ENCODE measurements at regions of chr12 and their contacts with region 1.

Region 1: GRCh38 chr12:57309420-57309819 is 58.4 kb upstream of the STAC3 start:
- DNase-seq: no peak
- ATAC-seq: no peak
- H3K4me3 ChIP-seq: no peak overlapping the region
- H3K27ac ChIP-seq: no peak overlapping the region
- H3K4me1 ChIP-seq: no peaks in the 10 kb centered on the region
- H3K27me3 ChIP-seq: no peaks in the 10 kb centered on the region
- CTCF ChIP-seq: no peak

Region 2: GRCh38 chr12:56839915-56840325 is 469.5 kb before region 1 on chr12:
- intact Hi-C with region 1: no loop called
- DNase-seq: peak; percentile 67
- ATAC-seq: peak; percentile 70
- H3K4me3 ChIP-seq: no peak overlapping the region
- H3K27ac ChIP-seq: peak overlapping the region; percentile 75
- H3K4me1 ChIP-seq: peaks cover 46% of the 10 kb centered on the region
- H3K27me3 ChIP-seq: no peaks in the 10 kb centered on the region
- CTCF ChIP-seq: peak; percentile 56

Region 3: DNA sequence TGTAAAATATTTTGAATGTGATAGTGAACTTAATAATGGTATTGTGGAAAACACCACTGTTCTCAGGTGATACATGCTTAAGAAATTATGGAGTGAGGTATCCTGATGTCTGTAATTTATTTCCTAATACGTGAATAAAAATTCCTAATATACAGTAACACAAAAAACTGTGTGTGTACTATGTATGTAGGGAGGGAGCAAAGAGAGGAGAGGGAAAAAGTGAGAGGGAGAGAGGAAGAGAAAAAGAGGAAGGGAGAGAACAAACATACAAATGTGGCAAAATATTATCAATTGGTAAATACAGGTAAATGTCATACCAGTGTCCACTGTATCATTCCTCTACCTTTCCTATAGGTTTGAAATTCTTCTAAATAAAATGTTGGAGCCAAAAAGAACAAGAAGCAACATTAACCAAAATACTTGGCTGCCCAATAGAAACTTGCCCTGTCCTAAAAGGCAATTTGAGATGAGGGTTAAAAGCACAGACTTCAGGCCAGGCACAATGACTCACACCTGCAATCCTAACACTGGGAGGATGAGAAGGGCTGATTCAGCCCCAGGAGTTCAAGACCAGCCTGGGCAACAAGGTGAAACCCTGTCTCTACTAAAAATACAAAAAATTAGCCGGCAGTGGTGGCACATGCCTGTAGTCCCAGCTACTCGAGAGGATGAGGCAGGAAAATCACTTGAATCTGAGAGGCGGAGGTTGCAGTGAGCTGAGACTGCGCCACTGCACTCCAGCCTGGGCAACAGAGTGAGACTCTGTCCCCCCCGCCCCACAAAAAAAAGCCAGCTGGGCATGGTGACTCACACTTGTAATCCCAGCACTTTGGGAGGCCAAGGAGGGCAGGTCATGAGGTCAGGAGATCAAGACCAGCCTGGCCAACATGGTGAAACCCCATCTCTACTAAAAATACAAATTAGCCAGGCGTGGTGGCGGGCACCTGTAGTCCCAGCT is 106.9 kb after region 1 on chr12:
- intact Hi-C with region 1: no loop called
- DNase-seq: no peak
- ATAC-seq: no peak
- H3K4me3 ChIP-seq: no peak overlapping the region
- H3K27ac ChIP-seq: no peak overlapping the region
- H3K4me1 ChIP-seq: no peaks in the 10 kb centered on the region
- H3K27me3 ChIP-seq: no peaks in the 10 kb centered on the region
- CTCF ChIP-seq: no peak

Region 4: DNA sequence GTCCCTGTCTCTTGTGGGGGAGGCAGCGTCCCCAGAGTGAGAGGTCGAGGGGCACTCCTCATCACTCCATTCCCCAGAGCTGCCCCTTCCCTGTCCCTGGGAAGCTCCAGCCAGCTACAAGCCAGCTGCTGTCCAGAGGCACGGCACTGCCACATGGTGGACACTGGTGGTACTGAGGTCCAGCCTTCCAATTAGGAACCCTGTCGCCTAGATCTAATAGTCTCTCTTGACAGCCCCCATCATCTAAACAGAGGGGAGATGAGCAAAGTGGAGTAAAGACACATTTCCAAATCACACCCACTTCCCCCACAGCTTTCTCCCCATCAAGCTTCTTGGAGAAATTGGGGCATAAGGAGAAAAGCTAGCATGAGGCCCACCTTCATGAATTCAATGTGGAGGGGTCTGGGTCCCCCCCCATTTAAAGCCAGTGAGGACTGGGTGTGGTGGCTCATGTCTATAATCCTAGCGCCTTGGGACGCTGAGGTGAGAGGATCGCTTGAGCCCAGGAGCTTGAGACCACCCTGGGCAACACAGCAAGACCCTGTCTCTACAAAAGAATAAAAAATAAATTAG is 143.6 kb after region 1 on chr12:
- intact Hi-C with region 1: loop called (anchors 5 kb)
- DNase-seq: peak; percentile 85
- ATAC-seq: peak; percentile 91
- H3K4me3 ChIP-seq: no peak overlapping the region
- H3K27ac ChIP-seq: no peak overlapping the region
- H3K4me1 ChIP-seq: no peaks in the 10 kb centered on the region
- H3K27me3 ChIP-seq: no peaks in the 10 kb centered on the region
- CTCF ChIP-seq: peak; percentile 90

Region 5: DNA sequence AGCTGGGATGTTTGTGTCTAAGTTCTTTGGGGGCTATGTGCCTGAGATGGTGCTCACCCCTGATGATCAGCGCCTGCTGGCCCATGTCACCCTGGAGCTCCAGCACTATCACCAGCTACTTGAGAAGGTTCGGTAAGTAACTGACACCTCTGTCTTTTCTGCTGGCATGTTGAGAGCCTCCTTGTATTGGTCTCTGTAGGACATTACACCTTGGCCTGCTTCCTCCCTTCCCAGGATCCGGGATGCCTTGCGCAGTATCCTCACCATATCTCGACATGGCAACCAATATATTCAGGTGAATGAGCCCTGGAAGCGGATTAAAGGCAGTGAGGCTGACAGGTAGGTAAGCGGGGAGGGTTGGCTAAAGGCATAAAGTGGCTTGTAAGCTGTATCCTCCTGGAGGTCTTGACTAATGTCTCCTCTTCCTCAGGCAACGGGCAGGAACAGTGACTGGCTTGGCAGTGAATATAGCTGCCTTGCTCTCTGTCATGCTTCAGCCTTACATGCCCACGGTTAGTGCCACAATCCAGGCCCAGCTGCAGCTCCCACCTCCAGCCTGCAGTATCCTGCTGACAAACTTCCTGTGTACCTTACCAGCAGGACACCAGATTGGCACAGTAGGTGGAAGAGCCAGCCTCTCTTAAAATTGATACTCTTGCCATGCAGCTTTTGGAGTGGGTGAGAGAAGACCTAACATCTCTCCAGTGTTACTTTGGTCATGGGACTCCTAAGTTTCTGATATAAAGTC is 205.5 kb after region 1 on chr12:
- intact Hi-C with region 1: no loop called
- DNase-seq: no peak
- ATAC-seq: no peak
- H3K4me3 ChIP-seq: no peak overlapping the region
- H3K27ac ChIP-seq: no peak overlapping the region
- H3K4me1 ChIP-seq: peaks cover 26% of the 10 kb centered on the region
- H3K27me3 ChIP-seq: no peaks in the 10 kb centered on the region
- CTCF ChIP-seq: no peak